BJ (cell line): ENCODE measurements at regions of chr12 and their contacts with region 1.

Region 1: DNA sequence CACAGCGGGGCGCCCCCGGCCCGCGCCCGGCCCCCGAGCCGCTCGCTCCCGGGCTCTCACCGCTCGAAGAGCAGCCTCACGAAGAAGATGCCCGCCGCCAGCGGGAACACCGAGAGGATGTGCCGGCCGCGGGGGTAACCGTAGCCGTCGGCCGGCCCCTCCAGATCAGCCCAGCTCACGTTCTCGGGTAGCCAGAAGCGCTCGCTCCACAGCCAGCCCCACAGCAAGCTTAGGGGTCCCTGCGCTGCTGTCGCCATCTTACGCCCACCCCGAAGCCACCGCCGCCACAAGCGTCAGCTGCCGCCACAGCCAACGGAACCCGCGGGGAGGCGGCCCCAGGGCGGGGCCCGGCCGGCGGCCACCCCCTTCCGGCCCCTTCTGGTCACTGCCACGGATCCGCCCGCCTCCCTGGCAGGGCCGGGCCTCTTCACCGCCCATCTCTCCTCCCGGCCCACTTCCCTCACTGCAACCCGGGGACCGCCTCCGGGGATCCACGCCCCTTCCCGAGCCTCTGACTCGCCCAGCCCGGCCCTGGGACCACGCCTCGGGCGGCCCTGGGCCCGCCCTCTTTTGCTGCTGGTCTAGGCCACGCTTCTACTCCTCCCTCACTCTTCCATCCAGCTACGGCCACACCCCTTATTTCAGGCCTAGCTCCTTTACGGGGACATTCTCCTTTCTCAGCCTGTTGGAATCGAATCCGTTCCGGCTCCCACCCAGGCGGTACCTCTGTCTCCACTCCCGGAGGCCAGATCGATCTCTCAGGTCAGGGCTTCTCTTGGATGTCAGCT is at the start of gene CERS5:
- DNase-seq: peak; percentile 94
- H3K4me3 ChIP-seq: peak within 1 kb of the TSS; percentile 59
- H3K27me3 ChIP-seq: no peaks in the 10 kb centered on the region
- CTCF ChIP-seq: no peak
- polyA plus RNA-seq, gene CERS5: 68.0 and 100 TPM in 2 replicates

Region 2: DNA sequence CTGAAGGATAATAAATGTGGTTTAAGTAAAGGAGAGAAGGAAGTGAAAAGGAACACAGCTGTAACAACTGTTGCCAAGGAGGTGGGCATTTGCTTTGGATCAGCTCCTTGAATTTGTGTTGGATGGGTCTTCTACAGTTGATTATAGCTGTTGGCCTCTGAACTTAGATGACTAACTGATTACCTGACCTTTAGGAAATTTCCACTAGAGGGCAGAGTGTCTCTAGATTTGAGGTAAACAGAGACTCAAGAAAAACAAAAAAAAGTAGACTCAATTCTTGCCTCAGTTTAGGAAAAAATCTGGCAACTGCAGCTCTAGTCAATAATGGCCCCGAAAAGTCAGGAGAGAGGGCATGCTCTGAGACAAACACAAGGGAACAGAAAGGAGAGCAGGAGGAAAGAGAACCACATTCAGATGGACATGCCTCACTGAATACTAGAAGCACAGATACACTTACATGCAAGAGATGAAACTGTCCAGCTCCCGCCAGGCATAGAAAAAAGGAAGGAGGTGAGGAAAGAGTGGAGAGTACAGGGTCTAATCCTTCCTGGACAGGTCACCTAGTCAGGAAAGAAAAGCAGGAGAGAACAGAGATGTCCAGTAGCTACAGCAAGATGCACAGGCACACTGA is 34.6 kb before region 1 on chr12:
- CTCF ChIA-PET with region 1: interaction called, 5 read pairs
- POLR2A ChIA-PET with region 1: interaction called, 17 read pairs
- DNase-seq: no peak
- H3K4me3 ChIP-seq: no peak overlapping the region
- H3K27me3 ChIP-seq: no peaks in the 10 kb centered on the region
- CTCF ChIP-seq: no peak

Region 3: DNA sequence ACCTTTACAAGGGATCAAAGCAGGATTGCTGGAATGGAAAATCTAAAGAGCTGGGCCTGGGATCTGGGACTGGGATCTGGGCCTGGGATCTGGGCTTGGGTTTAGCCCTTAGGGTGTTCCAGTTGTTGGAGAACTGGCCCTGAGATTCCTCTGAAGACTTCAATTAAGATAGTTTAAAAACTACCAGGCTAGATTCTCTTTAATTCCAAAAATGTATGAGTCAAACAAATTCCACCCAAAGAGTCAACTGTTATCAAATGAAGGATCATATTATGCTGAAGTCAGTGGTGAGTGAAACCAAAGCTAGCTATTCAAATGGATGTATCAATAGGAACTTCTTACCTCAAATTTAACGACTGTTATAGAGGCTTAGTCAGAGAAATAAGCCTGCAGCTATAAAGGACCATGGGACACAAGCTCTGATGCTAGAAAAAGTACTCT is 75.5 kb after region 1 on chr12:
- CTCF ChIA-PET with region 1: no interaction called
- POLR2A ChIA-PET with region 1: no interaction called
- DNase-seq: peak; percentile 77
- H3K4me3 ChIP-seq: no peak overlapping the region
- H3K27me3 ChIP-seq: no peaks in the 10 kb centered on the region
- CTCF ChIP-seq: no peak